CD4-positive, alpha-beta T cell (primary cell): ENCODE measurements at regions of chr3 and their contacts with region 1.

Region 1: DNA sequence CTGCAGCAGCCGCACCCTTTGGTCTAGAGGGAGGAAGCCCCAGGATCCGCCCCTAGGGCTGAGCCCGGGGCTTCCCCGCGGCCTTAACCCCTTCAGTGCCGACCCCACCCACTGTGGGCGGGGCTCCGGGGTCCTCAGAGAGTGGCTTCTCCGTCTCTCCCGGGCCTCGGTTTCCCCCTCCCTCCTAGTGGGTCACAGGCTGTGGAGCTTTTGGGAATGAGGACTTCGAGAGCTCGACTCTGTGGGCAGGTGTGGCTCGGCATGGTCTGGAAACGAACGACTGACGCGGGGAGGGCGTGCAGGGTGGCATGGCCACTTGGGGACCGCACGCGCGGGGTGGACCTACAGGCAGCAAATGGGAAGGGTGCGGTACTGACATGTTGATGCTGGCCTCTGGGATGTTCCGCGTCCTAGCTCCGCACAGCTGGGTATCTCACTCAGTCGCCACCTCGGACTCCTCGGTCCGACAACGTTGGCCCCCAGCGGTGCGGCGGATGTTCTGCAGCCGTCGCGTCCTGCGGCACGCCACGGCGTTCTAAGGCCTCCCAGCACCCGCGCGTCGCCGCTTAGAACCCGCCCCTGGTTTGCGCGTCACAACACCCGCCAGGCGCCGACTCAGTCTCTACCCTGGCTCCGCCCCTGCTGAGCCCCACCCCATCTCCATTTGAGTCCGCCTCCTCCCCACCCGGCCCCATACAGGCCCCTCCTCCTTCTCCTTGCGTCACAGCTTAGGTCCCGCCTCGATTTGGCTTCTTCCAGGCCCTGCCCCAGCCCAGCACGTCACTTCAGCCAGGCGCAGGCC is at the starts of genes HYAL3 and NAA80:
- DNase-seq: peak; percentile 98 to 100 (median 99)
- ATAC-seq: peak; percentile 83
- H3K4me3 ChIP-seq: peak within 1 kb of the TSS; percentile 82
- H3K4me3 Mint-ChIP-seq: peak within 1 kb of the TSS; percentile 99
- H3K27ac ChIP-seq: peak within 1 kb of the TSS; percentile 89 to 94
- H3K27ac Mint-ChIP-seq: peak within 1 kb of the TSS; percentile 99
- H3K4me1 ChIP-seq: peaks cover 31% of the 10 kb centered on the region
- H3K4me1 Mint-ChIP-seq: peaks cover 30% of the 10 kb centered on the region
- H3K27me3 ChIP-seq: no peaks in the 10 kb centered on the region
- H3K27me3 Mint-ChIP-seq: no peaks in the 10 kb centered on the region
- CTCF ChIP-seq: peak; percentile 56
- total RNA-seq, gene HYAL3: 3.0 to 3.2 TPM
- total RNA-seq, gene NAA80: 47.0 to 48.8 TPM

Region 2: DNA sequence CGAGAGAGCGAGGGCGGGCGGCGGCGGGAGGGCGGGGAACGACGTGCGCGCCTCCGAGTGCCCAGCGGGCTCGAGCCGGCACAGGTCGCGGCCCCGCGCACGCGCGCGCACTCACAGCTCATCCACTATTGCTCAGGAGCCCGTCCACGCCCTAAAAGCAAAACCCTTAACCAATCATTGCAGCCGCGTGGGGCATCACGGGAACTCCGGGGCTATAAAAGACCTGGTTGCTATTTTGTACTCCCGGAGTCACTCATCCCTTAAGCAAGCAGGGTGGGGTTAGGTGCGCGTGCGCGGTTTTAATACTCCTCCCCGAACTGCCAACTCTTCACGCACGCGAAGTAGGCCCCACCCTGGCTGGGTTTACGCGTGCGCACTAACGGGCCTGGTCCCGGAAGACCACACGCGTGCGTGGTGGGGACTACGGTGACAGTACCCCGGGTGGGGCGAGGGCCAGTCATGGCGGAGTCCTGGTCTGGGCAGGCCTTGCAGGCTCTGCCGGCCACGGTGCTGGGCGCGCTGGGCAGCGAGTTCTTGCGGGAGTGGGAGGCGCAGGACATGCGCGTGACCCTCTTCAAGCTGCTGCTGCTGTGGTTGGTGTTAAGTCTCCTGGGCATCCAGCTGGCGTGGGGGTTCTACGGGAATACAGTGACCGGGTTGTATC is 886.9 kb before region 1 on chr3 and contains the starts of genes RHOA and TCTA:
- CTCF ChIA-PET with region 1: no interaction called
- POLR2A ChIA-PET with region 1: no interaction called
- intact Hi-C with region 1: loop called in 1 of 2 experiments (anchors 5 kb)
- DNase-seq: peak; percentile 97 to 100 (median 99)
- ATAC-seq: peak; percentile 84
- H3K4me3 ChIP-seq: peak within 1 kb of the TSS; percentile 75
- H3K4me3 Mint-ChIP-seq: peak within 1 kb of the TSS; percentile 96
- H3K27ac ChIP-seq: peak within 1 kb of the TSS; percentile 94 to 95
- H3K27ac Mint-ChIP-seq: peak within 1 kb of the TSS; percentile 97
- H3K4me1 ChIP-seq: peaks cover 75% of the 10 kb centered on the region
- H3K4me1 Mint-ChIP-seq: peaks cover 70% of the 10 kb centered on the region
- H3K27me3 ChIP-seq: no peaks in the 10 kb centered on the region
- H3K27me3 Mint-ChIP-seq: no peaks in the 10 kb centered on the region
- CTCF ChIP-seq: no peak
- total RNA-seq, gene RHOA: 256 to 271 TPM
- total RNA-seq, gene TCTA: 21.4 to 22.0 TPM

Region 3: GRCh38 chr3:49759226-49759625 is 539.8 kb before region 1 on chr3:
- CTCF ChIA-PET with region 1: no interaction called
- POLR2A ChIA-PET with region 1: no interaction called
- intact Hi-C with region 1: no loop called
- DNase-seq: no peak
- ATAC-seq: no peak
- H3K4me3 ChIP-seq: no peak overlapping the region
- H3K4me3 Mint-ChIP-seq: no peak overlapping the region
- H3K27ac ChIP-seq: no peak overlapping the region
- H3K27ac Mint-ChIP-seq: no peak overlapping the region
- H3K4me1 ChIP-seq: peaks cover 3% of the 10 kb centered on the region
- H3K4me1 Mint-ChIP-seq: peaks cover 40% of the 10 kb centered on the region
- H3K27me3 ChIP-seq: no peaks in the 10 kb centered on the region
- H3K27me3 Mint-ChIP-seq: no peaks in the 10 kb centered on the region
- CTCF ChIP-seq: no peak

Region 4: GRCh38 chr3:50235716-50236496 is 63.1 kb before region 1 on chr3 and contains the start of gene GNAI2:
- CTCF ChIA-PET with region 1: no interaction called
- POLR2A ChIA-PET with region 1: interaction called, 25 read pairs
- intact Hi-C with region 1: loop called in 1 of 2 experiments (anchors 2 kb)
- DNase-seq: peak; percentile 97 to 100 (median 99)
- ATAC-seq: peak; percentile 85
- H3K4me3 ChIP-seq: peak within 1 kb of the TSS; percentile 99
- H3K4me3 Mint-ChIP-seq: peak within 1 kb of the TSS; percentile 94
- H3K27ac ChIP-seq: peak within 1 kb of the TSS; percentile 73 to 80
- H3K27ac Mint-ChIP-seq: peak within 1 kb of the TSS; percentile 92
- H3K4me1 ChIP-seq: peaks cover 47% of the 10 kb centered on the region
- H3K4me1 Mint-ChIP-seq: peaks cover 45% of the 10 kb centered on the region
- H3K27me3 ChIP-seq: no peaks in the 10 kb centered on the region
- H3K27me3 Mint-ChIP-seq: no peaks in the 10 kb centered on the region
- CTCF ChIP-seq: no peak
- total RNA-seq, gene GNAI2: 204 to 217 TPM

Region 5: DNA sequence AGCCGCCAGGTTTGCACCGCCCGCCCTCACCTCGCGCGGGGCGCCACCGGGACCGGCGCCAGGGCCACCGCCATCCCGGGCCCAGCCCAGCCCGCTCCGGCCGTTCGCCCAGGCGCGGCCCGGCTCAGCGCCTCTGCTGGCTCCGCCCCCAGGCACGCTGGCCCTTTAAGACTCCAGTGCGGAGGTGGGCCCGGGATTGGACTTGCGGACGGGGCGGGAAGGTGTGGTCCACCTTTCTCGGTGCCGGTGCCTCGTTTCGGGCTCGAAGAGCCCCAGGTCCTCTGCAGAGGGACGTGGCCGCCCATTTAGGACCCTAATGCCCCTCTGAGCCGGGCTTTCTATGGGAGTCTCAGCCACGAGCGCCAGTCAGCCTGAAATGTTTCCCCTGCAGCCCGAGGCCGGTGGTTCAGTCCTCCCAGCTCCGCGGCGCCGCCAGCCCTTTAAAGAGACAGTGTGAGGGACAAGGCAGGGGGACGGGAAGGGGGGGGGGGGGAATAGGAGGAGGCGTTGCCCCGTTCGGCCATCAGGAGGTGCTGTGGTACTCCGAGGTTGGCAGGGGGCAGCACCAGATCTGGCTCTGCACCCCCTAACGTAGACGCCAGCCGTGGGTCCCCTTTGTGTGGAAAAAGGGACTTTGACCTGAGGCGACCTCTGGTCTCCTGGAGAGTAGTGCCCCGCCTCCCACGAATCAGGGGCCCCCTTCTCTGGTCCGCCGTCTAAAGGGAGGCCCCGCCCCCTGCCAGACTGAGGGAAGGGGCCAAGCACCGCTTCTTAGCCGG is 22.5 kb after region 1 on chr3:
- CTCF ChIA-PET with region 1: interaction called, 18 read pairs
- POLR2A ChIA-PET with region 1: interaction called, 25 read pairs
- intact Hi-C with region 1: loop called (anchors 1 to 2 kb)
- DNase-seq: peak; percentile 68 to 89 (median 76)
- ATAC-seq: peak; percentile 66
- H3K4me3 ChIP-seq: peak overlapping the region; percentile 68
- H3K4me3 Mint-ChIP-seq: peak overlapping the region; percentile 90
- H3K27ac ChIP-seq: peak overlapping the region; percentile 75 to 96
- H3K27ac Mint-ChIP-seq: peak overlapping the region; percentile 82
- H3K4me1 ChIP-seq: peaks cover 76% of the 10 kb centered on the region
- H3K4me1 Mint-ChIP-seq: peaks cover 42% of the 10 kb centered on the region
- H3K27me3 ChIP-seq: no peaks in the 10 kb centered on the region
- H3K27me3 Mint-ChIP-seq: no peaks in the 10 kb centered on the region
- CTCF ChIP-seq: peak; percentile 45

Region 6: DNA sequence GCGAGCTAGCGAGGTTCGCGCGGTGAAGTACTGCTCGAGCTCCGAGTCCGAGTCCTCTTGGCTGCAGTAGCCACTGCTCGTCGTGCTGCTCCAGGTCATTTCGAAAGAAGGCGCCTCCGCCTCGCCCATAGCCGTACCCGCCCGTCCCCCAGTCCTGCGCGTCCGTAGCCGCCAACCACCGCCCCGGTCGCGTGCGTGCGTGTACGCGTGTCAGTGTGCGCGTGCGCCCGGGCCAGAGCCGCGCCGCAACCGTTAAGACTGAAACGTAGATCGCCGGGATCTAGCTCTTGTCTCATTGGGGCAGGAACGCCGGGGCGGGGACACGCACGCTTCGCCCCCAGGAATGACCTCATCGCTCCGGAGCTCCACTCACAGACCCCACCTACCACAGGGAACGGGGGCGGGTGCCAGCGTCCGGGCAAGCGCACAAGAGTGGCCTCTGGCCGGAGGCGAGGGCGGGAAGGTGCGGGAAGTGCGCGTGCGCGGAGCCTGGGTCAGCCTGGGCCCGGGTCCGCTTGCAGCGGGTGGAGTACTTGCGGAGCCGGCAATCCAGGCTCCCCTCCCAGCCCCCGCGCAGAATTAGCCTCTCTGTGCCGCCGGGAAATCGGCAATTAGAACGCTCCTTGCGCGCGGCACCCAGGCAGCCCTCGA is 38.3 kb after region 1 on chr3:
- CTCF ChIA-PET with region 1: interaction called, 8 read pairs
- POLR2A ChIA-PET with region 1: interaction called, 54 read pairs
- intact Hi-C with region 1: loop called in 1 of 2 experiments (anchors 5 kb)
- DNase-seq: peak; percentile 81 to 98 (median 90)
- ATAC-seq: peak; percentile 77
- H3K4me3 ChIP-seq: peak overlapping the region; percentile 93
- H3K4me3 Mint-ChIP-seq: peak overlapping the region; percentile 96
- H3K27ac ChIP-seq: peak overlapping the region; percentile 95 to 96
- H3K27ac Mint-ChIP-seq: peak overlapping the region; percentile 95
- H3K4me1 ChIP-seq: peaks cover 85% of the 10 kb centered on the region
- H3K4me1 Mint-ChIP-seq: peaks cover 71% of the 10 kb centered on the region
- H3K27me3 ChIP-seq: no peaks in the 10 kb centered on the region
- H3K27me3 Mint-ChIP-seq: no peaks in the 10 kb centered on the region
- CTCF ChIP-seq: no peak

Region 7: DNA sequence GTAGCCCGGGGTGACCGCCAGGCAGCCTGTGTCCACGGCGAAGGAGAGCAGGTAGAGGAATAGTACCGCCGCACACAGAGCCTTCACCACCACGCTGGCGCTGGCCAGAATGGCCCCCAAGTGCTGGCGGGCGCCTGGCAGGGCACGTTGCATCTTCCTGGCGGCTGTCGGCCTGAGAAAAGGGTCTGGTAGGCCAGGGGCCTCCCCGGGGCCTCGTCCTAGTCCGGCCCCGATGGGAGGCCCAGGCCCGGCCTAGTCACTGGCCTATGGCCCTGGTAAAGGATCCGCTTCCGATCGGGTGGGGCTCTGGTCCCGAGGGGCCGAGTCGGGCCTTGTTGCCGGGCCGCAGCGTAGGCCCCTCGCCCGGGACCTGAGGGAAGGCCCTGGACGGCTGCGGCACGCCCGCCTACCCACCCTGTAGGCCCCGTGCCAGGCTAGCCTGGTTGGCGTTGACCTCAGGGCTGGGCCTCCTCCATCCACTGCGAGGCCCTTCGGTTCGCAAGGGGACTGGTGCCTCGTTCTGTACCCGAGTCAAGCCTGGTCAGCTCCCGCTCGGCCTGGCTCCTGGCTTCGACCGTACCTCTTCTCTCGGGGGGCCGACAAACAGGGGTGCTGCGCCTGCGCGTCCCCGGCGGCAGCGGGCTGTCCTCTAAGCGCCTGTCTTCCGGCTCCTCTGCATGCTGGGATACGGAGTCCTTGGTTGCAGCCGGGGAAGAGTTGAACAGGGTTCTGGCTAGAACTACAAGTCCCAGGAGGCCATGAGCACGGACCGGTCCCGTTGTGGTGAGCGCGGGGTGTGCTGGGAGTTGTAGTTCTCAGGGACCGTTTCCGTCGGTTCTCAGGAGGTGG is 60.1 kb after region 1 on chr3 and contains the start of gene TMEM115:
- CTCF ChIA-PET with region 1: interaction called, 3 read pairs
- POLR2A ChIA-PET with region 1: no interaction called
- intact Hi-C with region 1: loop called in 1 of 2 experiments (anchors 2 kb)
- DNase-seq: peak; percentile 82 to 99 (median 92)
- ATAC-seq: peak; percentile 100
- H3K4me3 ChIP-seq: peak within 1 kb of the TSS; percentile 81
- H3K4me3 Mint-ChIP-seq: peak within 1 kb of the TSS; percentile 98
- H3K27ac ChIP-seq: peak within 1 kb of the TSS; percentile 78 to 84
- H3K27ac Mint-ChIP-seq: peak within 1 kb of the TSS; percentile 88
- H3K4me1 ChIP-seq: peaks cover 46% of the 10 kb centered on the region
- H3K4me1 Mint-ChIP-seq: peaks cover 43% of the 10 kb centered on the region
- H3K27me3 ChIP-seq: no peaks in the 10 kb centered on the region
- H3K27me3 Mint-ChIP-seq: no peaks in the 10 kb centered on the region
- CTCF ChIP-seq: no peak
- total RNA-seq, gene TMEM115: 19.0 to 19.9 TPM